CD8-positive, alpha-beta memory T cell (primary cell): ENCODE measurements at regions of chr14 and their contacts with region 1.

Region 1: GRCh38 chr14:58265401-58265800 is 20.8 kb downstream of the PSMA3 start:
- DNase-seq: no peak
- H3K4me3 ChIP-seq: no peak overlapping the region
- H3K4me3 Mint-ChIP-seq: no peak overlapping the region
- H3K27ac ChIP-seq: no peak overlapping the region
- H3K27ac Mint-ChIP-seq: peak overlapping the region in 4 of 8 donors; percentile 29 to 73 (median 50)
- H3K4me1 ChIP-seq: no peaks in the 10 kb centered on the region
- H3K4me1 Mint-ChIP-seq: peaks cover 4 to 31% (median 28%) of the 10 kb centered on the region in 3 donors
- H3K27me3 ChIP-seq: no peaks in the 10 kb centered on the region
- H3K27me3 Mint-ChIP-seq: no peaks in the 10 kb centered on the region

Region 2: GRCh38 chr14:58280954-58281787 is 15.8 kb after region 1 on chr14:
- CTCF ChIA-PET with region 1: interaction called, 3 read pairs
- POLR2A ChIA-PET with region 1: interaction called, 10 read pairs
- DNase-seq: peak in 1 of 5 donors; percentile 52
- H3K4me3 ChIP-seq: no peak overlapping the region
- H3K4me3 Mint-ChIP-seq: peak overlapping the region in 6 of 7 donors; percentile 37 to 73 (median 58)
- H3K27ac ChIP-seq: peak overlapping the region; percentile 27
- H3K27ac Mint-ChIP-seq: peak overlapping the region; percentile 24 to 92 (median 82)
- H3K4me1 ChIP-seq: peaks cover 36% of the 10 kb centered on the region
- H3K4me1 Mint-ChIP-seq: peaks cover 63 to 76% (median 75%) of the 10 kb centered on the region in 3 donors
- H3K27me3 ChIP-seq: no peaks in the 10 kb centered on the region
- H3K27me3 Mint-ChIP-seq: no peaks in the 10 kb centered on the region